Common myeloid progenitor, CD34-positive (primary cell): ENCODE measurements at regions of chr17 and their contacts with region 1.

Region 1: GRCh38 chr17:45021607-45022287 is 29.7 kb downstream of the DCAKD start:
- DNase-seq: peak; percentile 56 to 75 (median 74)
- H3K4me3 ChIP-seq: peak overlapping the region in 5 of 7 experiments; percentile 19 to 73 (median 60)
- H3K27ac ChIP-seq: no peak overlapping the region
- H3K4me1 ChIP-seq: peaks cover 0 to 26% (median 17%) of the 10 kb centered on the region in 4 experiments
- H3K27me3 ChIP-seq: peaks cover 5 to 43% (median 27%) of the 10 kb centered on the region in 5 experiments

Region 2: DNA sequence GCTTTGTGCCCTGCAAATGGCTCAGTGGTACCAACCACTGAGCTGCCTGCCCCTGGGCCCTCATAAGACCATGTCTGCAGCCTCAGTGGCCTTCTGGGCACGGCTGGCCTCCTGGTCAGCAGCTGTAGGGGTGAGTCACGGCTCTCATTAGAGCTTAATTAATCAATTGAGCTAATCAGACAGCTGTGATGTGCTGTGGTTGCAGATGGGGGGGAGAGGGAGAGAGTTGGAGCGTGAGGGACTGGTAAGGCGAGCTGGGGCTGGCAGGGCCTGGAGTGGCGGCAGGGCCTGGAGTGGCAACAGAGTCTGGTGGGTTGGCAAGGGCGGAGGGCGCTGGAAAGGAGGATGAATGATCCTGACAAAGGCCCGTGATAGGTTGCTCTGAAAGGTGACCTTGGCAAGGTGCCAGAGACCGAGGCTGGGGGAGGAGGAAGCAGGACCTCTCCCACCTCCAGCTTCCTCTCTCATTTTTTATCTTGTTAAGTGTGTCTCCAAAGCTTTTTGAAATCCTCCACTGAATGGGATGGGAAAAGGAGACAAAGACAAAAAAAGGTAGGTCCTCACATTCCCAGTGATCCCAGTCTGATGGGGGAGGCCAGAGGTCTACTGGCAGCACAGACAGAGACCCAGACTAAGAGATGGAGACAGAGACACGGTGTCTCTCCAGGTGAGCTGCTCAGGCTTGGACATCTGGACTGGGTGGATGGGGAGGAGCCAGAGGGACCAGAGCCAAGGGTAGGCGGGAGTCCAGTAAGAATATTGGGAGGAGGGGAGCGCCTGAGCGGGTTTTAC is 11.9 kb before region 1 on chr17:
- CTCF ChIA-PET with region 1: interaction called, 10 read pairs
- POLR2A ChIA-PET with region 1: no interaction called
- DNase-seq: no peak
- H3K4me3 ChIP-seq: no peak overlapping the region
- H3K27ac ChIP-seq: no peak overlapping the region
- H3K4me1 ChIP-seq: no peaks in the 10 kb centered on the region
- H3K27me3 ChIP-seq: peaks cover 0 to 13% (median 0%) of the 10 kb centered on the region in 5 experiments

Region 3: GRCh38 chr17:45038728-45039634 is 17.2 kb after region 1 on chr17:
- CTCF ChIA-PET with region 1: interaction called, 23 read pairs
- POLR2A ChIA-PET with region 1: interaction called, 3 read pairs
- DNase-seq: no peak
- H3K4me3 ChIP-seq: no peak overlapping the region
- H3K27ac ChIP-seq: peak overlapping the region in 1 of 2 experiments; percentile 34
- H3K4me1 ChIP-seq: peaks cover 0 to 1% (median 0%) of the 10 kb centered on the region in 4 experiments
- H3K27me3 ChIP-seq: no peaks in the 10 kb centered on the region

Region 4: DNA sequence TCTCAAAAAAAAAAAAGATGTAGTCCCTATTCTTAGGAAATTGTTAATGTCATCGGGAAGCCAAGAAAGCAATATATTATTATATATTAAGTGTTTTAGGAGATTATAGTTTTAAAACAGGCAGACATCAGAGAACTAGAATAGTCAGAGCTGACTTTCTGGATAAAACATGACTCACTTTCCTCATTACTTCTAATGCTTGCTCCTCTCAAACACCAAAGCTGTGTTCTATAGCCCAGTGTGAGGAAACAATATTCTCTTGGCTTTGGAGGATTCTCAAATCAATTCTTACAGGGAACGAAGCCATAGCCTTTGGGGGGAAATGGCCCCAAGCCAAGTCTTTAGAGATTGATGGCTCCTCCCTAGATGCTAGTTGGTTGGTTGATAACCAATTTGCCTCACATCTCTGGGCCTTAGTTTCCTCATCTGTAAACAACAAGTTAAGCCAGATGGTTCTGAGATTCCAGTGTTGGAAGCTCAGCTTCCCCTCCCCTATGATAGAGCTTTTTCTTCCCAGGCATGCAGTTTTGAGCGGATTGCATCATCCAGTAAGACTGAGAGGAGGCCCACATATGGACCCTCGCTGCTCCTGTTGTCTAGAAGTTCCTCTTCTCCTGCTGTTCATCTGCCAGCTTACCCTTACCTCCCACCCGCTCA is 51.8 kb after region 1 on chr17:
- CTCF ChIA-PET with region 1: no interaction called
- POLR2A ChIA-PET with region 1: no interaction called
- DNase-seq: no peak
- H3K4me3 ChIP-seq: no peak overlapping the region
- H3K27ac ChIP-seq: no peak overlapping the region
- H3K4me1 ChIP-seq: peaks cover 3 to 34% (median 24%) of the 10 kb centered on the region in 4 experiments
- H3K27me3 ChIP-seq: no peaks in the 10 kb centered on the region

Region 5: DNA sequence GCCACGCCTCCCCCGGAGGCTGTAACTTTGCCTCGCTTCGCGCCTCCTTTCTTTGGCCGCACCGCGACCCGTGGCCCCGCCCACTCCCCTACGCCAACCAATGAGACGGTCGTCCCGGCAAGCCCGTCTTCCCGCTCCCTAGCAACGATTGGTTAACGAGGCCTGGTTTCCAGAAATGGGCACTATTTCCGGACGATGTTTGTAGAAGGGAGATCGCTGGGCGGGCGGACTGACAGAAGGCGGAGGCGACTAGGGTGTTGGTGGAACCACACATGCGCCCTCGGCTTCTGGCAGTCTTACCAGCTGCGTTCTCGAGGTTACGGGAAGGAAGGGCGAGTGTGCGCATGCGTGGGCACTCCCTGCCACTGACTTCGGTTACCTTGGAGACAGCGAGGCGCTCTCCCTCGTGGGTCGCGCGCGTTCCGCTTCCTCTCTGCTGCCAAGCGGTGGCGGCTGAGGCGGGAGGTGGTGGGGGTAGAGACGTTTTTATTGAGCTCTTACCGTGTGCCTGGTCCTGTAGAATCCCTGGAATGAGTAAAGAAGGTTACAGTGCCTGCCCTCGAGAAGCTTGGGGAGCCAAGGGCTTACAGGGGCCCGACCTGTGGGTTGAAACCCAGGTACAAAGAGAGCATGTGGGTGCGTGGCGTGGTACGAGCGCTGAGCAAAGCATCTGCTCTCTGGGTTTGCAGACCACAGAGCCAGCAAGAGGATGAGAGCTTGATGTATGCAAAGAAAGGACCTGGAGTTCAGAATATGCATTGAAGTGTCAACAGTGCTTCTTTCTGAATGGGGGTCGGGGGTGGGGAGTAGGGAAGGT is 295.6 kb after region 1 on chr17:
- CTCF ChIA-PET with region 1: no interaction called
- POLR2A ChIA-PET with region 1: no interaction called
- DNase-seq: peak; percentile 100
- H3K4me3 ChIP-seq: peak overlapping the region; percentile 40 to 88 (median 83)
- H3K27ac ChIP-seq: peak overlapping the region; percentile 17 to 84
- H3K4me1 ChIP-seq: peaks cover 39 to 70% (median 67%) of the 10 kb centered on the region in 4 experiments
- H3K27me3 ChIP-seq: no peaks in the 10 kb centered on the region